ENCODE measurements at regions of chr4 and their contacts with region 1.

Region 1: GRCh38 chr4:156686120-156686519 is 285.5 kb downstream of the PDGFC start:
- DNase-seq: peak; percentile 98
- H3K4me3 ChIP-seq: no peak overlapping the region
- H3K27me3 ChIP-seq: no peaks in the 10 kb centered on the region
- CTCF ChIP-seq: no peak

Region 2: DNA sequence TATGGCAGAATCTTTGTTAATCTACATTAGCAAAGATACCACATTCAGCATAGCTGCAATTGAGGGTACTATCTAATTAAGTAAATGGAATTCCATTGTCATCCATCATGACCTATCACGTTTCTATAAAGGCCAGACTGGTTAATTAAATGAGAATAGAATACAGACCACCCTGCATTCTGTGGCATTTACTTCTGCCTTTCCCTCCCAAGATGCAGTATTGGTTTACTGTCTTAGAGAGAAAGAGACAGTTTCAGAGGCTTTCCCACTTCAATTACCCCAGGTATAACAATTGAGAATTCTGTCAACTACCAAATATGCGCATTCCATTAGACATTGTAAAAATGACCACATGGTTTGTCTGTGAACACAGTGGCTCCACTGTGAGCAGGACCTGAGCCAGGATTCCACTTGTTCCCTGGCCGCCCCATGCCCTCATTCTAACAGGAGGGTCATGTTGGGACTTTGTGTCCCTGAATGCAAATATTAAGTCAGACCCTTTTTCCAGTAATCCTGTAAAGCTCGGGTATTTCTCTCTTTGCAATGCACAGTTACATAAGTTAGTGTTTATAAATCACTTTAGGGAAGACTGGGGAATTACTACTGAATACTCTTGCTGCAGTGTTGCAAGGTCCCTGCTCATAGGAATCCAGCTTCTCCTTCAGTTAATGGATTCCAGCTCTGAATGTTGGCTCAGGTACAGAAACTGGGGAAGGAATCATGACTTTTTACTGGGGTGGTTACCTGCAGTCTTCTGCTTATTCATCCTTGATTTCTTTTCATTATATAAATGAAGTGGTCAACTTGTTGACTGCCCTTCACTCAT is 24.5 kb after region 1 on chr4:
- CTCF ChIA-PET with region 1: no interaction called
- POLR2A ChIA-PET with region 1: interaction called, 11 read pairs
- DNase-seq: peak; percentile 37
- H3K4me3 ChIP-seq: no peak overlapping the region
- H3K27me3 ChIP-seq: no peaks in the 10 kb centered on the region
- CTCF ChIP-seq: no peak

Region 3: DNA sequence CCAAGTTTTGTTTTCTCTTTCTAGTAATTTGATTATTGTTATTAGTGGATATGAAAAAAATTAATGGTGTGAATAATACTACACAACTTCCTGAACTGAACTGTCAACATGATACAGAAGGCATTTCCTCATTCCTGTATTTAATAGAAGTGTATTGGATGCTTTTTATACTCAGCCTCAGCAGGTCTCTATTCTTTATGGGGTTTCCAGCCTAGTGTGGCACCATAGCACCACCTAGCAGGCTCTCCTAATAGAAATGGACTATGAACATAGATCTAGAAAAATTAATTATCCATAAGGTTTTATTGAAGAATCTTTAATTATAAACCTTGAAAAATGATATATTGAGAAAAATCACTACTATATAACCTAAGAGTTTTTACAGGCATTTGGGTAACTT is 442.3 kb after region 1 on chr4:
- CTCF ChIA-PET with region 1: no interaction called
- POLR2A ChIA-PET with region 1: no interaction called
- DNase-seq: no peak
- H3K4me3 ChIP-seq: no peak overlapping the region
- H3K27me3 ChIP-seq: no peaks in the 10 kb centered on the region
- CTCF ChIP-seq: peak; percentile 60

Region 4: GRCh38 chr4:157172011-157172410 is 485.9 kb after region 1 on chr4:
- CTCF ChIA-PET with region 1: no interaction called
- POLR2A ChIA-PET with region 1: no interaction called
- DNase-seq: no peak
- H3K4me3 ChIP-seq: no peak overlapping the region
- H3K27me3 ChIP-seq: no peaks in the 10 kb centered on the region
- CTCF ChIP-seq: no peak

Measured in BJ (cell line).